Upper lobe of right lung (tissue), 1 donor: ENCODE measurements at regions of chr11 and their contacts with region 1.

Region 1: DNA sequence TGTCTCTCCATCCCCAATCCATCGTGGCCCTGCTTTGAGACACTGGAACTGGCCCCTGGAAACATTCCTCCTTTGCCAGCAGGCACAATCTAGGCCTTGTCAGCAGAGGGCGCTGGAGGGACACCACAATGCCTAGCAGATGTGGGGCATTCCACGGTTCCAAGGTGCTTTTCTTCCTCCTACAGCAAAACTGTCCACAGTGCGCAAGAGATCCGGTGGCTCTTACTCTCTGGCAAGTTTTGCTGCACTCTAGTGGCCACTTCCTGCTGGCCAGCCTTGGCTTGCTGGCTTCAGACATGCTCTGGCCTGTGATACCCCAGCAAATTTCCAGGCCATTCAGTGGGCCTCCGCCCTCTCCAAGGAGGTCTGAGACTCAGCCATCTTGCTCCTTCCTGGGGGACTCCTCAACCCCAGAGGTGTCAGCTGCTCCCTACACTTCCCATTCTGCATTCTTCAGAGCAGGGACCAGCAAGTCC is 17.1 kb upstream of the RBM4B start:
- DNase-seq: peak; percentile 91
- ATAC-seq: peak; percentile 96
- H3K4me3 ChIP-seq: no peak overlapping the region
- H3K27ac ChIP-seq: no peak overlapping the region
- H3K4me1 ChIP-seq: no peaks in the 10 kb centered on the region
- H3K27me3 ChIP-seq: no peaks in the 10 kb centered on the region
- CTCF ChIP-seq: peak; percentile 90

Region 2: DNA sequence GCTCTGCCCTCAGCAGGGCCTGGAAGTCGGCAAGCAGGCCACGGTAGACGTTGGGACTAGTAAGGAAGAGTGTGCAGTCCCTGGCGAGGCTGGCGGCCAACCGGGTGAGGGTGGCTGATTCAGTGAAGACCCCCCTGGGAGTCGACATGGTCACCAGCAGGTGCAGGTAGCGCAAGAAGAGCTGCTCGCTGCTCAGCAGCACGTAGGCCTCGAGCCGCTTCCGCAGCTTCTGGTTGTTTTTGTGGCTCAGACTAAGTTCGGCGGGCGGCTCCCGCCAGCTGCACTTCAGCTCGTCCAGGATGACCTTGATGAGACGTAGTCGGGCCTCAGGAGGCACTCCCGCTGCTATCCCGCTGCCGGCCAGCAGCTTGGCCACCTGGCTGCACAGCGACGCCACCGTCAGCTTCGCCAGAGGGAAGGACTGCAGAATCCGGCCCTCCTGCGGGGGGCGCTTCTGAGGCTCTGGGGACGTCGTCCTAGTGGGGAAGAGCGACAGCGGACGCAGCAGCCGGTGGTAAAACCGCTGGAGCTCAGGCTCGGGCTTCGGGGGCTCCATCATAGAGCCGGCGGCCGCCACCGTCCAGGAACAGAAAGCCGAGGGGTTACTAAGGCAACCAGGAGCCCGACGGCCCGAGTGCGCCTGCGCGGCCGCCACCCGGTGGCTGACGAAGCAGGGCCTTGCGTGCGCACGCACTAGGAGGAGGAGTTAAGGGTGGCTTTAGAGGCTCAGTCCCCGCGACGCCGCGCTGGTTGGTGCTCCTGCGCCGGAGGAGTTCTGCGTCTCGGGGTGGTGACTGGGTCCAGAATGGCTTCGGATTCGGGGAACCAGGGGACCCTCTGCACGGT is 102.1 kb before region 1 on chr11 and contains the starts of genes CCDC87 and CCS:
- intact Hi-C with region 1: no loop called
- DNase-seq: peak; percentile 99
- ATAC-seq: peak; percentile 98
- H3K4me3 ChIP-seq: peak within 1 kb of the TSS; percentile 90
- H3K27ac ChIP-seq: peak within 1 kb of the TSS; percentile 85
- H3K4me1 ChIP-seq: peaks cover 26% of the 10 kb centered on the region
- H3K27me3 ChIP-seq: no peaks in the 10 kb centered on the region
- CTCF ChIP-seq: peak; percentile 63
- total RNA-seq, gene CCDC87: 0.26 TPM
- total RNA-seq, gene CCS: 31.9 TPM

Region 3: GRCh38 chr11:66744485-66745340 is 49.9 kb after region 1 on chr11:
- intact Hi-C with region 1: no loop called
- DNase-seq: peak; percentile 92
- ATAC-seq: peak; percentile 95
- H3K4me3 ChIP-seq: peak overlapping the region; percentile 95
- H3K27ac ChIP-seq: peak overlapping the region; percentile 80
- H3K4me1 ChIP-seq: peaks cover 9% of the 10 kb centered on the region
- H3K27me3 ChIP-seq: no peaks in the 10 kb centered on the region
- CTCF ChIP-seq: no peak

Region 4: GRCh38 chr11:66834501-66834845 is 139.7 kb after region 1 on chr11:
- intact Hi-C with region 1: loop called (anchors 5 kb)
- DNase-seq: no peak
- ATAC-seq: no peak
- H3K4me3 ChIP-seq: no peak overlapping the region
- H3K27ac ChIP-seq: no peak overlapping the region
- H3K4me1 ChIP-seq: no peaks in the 10 kb centered on the region
- H3K27me3 ChIP-seq: no peaks in the 10 kb centered on the region
- CTCF ChIP-seq: no peak

Region 5: GRCh38 chr11:66846671-66847091 is 151.9 kb after region 1 on chr11:
- intact Hi-C with region 1: no loop called
- DNase-seq: no peak
- ATAC-seq: no peak
- H3K4me3 ChIP-seq: no peak overlapping the region
- H3K27ac ChIP-seq: no peak overlapping the region
- H3K4me1 ChIP-seq: peaks cover 16% of the 10 kb centered on the region
- H3K27me3 ChIP-seq: no peaks in the 10 kb centered on the region
- CTCF ChIP-seq: no peak